Dorsolateral prefrontal cortex (tissue), 120 donors: ENCODE measurements at regions of chr6 and their contacts with region 1.

Region 1: DNA sequence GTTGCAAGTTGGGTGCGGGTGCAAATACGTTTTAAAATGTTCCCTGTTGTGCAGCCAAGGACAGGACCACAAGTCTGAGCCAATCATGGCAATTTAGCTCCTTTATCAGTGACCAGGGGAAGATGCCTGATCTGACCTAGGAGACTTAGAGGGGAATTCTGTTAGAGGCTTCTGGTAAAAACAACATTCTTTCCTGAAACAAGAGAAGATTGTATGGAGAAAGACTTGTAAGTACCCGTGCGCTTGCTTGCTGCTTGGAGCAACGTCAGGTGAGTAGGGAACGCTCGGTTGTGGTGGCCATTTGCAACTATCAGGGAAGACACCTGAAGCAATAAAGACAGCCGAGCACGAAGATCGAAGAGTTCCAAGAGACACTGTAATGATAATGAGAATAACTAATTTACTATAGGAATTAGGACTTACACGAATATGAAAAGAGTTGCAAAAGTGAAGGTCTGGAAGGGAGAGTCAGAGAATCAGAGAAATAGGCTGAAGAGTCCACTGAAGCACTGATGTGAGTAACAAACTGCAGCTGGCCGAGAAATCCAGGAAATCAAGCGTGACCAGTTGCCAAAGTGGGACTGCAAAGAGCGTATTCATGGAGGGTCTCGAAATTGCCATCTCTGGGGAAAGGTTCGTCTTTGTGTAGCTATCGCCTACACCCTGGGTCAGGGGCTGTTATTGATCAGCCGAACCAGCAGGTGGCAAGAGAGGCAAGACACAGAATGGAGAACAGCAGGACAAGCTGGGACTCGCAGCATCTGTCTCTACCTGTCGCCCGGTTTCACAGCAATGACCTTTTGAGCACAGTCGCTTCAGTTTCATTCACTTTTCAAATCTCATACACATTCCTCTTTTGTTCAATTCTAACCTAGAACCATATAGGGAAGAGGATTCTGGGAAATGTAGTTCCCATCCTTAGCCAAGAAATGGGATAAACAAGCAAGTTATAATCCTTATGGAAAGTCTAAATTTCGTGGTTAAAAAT is 26.1 kb downstream of the LOC128125822 start:
- DNase-seq: peak; percentile 48 to 80 (median 69)
- H3K4me3 ChIP-seq: peak overlapping the region; percentile 46 to 85 (median 66)
- H3K27ac ChIP-seq: peak overlapping the region in 58 of 59 donors; percentile 5 to 85 (median 68)
- H3K27me3 ChIP-seq: no peaks in the 10 kb centered on the region
- CTCF ChIP-seq: peak; percentile 45 to 93 (median 86)

Region 2: GRCh38 chr6:63571881-63572732 is 26.2 kb before region 1 on chr6 and contains the starts of genes LOC128125822 and PTP4A1:
- intact Hi-C with region 1: loop called (anchors 2 kb)
- DNase-seq: peak; percentile 98 to 99 (median 98)
- H3K4me3 ChIP-seq: peak within 1 kb of the TSS; percentile 65 to 100 (median 90)
- H3K27ac ChIP-seq: peak within 1 kb of the TSS; percentile 79 to 100 (median 98)
- H3K27me3 ChIP-seq: no peaks in the 10 kb centered on the region
- CTCF ChIP-seq: peak in 10 of 56 donors; percentile 5 to 33 (median 15)
- total RNA-seq, gene PTP4A1: 17.6 to 85.2 (median 40.6) TPM

Region 3: DNA sequence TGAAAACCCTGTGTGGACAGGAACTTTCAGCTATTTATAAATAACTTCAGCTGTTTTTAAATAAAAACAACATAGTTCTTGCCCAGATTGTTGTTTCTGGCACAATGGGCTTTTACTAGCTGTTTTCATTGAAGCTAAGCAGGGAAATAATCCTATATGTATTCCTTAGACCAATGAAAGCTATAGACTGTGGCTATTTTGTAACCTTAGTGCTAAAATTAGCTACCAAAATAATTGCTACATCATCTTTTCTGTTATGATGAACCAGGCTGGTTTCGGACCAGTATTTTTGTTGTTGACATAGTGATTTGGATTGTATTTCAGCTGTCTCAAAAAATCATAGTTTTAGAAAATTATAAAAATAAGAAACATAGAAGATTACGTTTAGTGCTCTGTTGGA is 50.9 kb after region 1 on chr6:
- intact Hi-C with region 1: no loop called
- DNase-seq: no peak
- H3K4me3 ChIP-seq: no peak overlapping the region
- H3K27ac ChIP-seq: no peak overlapping the region
- H3K27me3 ChIP-seq: no peaks in the 10 kb centered on the region
- CTCF ChIP-seq: no peak

Region 4: GRCh38 chr6:63764318-63764916 is 166.1 kb after region 1 on chr6:
- intact Hi-C with region 1: loop called in 1 of 2 experiments (anchors 5 kb)
- DNase-seq: no peak
- H3K4me3 ChIP-seq: no peak overlapping the region
- H3K27ac ChIP-seq: no peak overlapping the region
- H3K27me3 ChIP-seq: no peaks in the 10 kb centered on the region
- CTCF ChIP-seq: peak; percentile 55 to 94 (median 82)

Region 5: DNA sequence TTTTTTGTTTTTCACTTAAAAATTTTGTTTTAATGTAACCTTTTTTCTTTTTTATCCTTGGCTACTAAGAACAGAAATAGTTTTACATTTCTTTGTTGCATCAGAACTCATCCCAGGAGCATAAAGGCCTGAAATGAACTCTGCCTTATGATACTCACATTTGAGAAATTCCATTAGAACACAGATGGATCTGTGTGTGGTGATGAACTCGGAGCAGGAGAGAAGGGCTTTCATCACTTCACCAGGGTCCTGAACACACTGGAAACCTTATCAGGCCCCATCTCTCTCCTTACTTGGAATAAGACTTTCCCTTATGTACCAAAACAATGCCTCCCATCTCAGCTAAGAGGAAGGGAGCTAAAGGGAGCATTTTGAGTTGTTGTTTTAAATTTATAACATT is 176.6 kb after region 1 on chr6:
- intact Hi-C with region 1: no loop called
- DNase-seq: no peak
- H3K4me3 ChIP-seq: no peak overlapping the region
- H3K27ac ChIP-seq: no peak overlapping the region
- H3K27me3 ChIP-seq: peaks cover 0 to 5% (median 0%) of the 10 kb centered on the region in 45 donors
- CTCF ChIP-seq: no peak